Activated CD4-positive, alpha-beta T cell treated with anti-CD3 and anti-CD28 coated beads, Interleukin-2, amount 10 ng/mL, durations not matched to agents 24 days and 14 days (primary cell): ENCODE measurements at regions of chr3 and their contacts with region 1.

Region 1: DNA sequence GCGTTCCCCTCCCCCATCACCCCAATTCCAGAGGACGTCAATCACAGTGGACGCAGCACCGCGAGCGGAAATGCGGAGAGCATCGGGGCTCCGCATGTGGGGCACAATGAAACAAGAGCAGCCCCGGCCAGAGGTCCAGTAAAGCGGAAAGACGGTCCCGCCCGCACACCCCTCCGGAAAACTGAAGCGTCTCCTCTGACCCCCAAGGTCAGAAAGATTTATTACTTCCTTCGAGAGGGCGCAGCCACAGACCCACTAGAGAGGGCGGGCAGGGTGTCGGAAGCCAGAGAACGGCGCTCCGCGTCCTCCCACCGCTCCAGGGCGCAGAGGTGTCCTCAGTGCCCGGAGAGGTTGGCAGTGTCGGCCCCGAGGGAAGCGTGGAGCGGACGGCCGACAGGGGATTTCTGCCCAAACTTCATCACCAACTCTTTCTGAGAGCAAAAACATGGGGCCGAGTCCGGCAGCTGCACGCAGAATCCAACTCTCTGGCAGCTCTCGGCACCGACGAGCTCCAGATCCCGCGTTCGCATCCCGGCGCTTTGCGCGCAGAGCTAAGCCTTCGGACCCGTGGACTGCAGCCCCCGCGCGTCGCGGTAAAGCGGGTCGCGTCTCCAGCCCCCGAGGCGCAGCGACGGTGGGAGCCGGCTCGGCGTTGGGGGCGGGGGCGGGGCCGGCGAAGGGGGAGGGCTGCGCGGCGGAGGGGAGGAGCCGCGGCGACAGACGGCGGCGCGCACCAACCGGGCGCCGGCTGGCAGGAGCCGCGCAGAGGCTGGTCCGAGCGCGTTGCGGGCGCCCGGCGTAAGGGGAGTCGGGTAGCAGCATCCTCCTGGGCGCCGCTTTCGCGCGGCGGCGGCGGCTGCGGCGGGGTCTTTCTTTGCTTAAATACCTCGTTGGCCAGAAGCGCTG is at the start of gene CHST2:
- DNase-seq: peak; percentile 92
- H3K4me3 Mint-ChIP-seq: peak within 1 kb of the TSS; percentile 89
- H3K27ac Mint-ChIP-seq: peak within 1 kb of the TSS; percentile 76
- H3K4me1 Mint-ChIP-seq: peaks cover 29% of the 10 kb centered on the region
- H3K27me3 Mint-ChIP-seq: peaks cover 22% of the 10 kb centered on the region
- total RNA-seq, gene CHST2: 6.1 and 6.4 TPM in 2 replicates

Region 2: DNA sequence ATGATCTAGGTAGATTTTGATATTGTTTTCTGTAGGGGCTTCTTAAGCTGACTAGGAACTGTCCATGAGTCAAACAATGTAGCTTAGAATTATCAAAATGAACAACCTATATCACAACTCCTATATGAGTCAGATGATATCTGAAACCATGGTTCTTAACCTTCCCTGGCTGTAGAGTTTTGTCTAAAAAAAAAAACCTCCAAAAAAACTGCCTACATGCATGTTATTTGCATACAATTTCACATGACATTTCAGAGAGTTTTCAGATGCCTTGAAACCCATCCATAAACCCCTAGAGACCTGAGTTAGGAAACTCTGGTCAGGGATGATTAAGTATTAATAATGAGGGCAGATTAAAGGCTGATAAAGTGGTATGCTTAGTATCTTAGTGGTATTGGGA is 157.3 kb after region 1 on chr3:
- intact Hi-C with region 1: loop called (anchors 5 kb)
- DNase-seq: no peak
- H3K4me3 Mint-ChIP-seq: no peak overlapping the region
- H3K27ac Mint-ChIP-seq: no peak overlapping the region
- H3K4me1 Mint-ChIP-seq: peaks cover 6% of the 10 kb centered on the region
- H3K27me3 Mint-ChIP-seq: no peaks in the 10 kb centered on the region

Region 3: DNA sequence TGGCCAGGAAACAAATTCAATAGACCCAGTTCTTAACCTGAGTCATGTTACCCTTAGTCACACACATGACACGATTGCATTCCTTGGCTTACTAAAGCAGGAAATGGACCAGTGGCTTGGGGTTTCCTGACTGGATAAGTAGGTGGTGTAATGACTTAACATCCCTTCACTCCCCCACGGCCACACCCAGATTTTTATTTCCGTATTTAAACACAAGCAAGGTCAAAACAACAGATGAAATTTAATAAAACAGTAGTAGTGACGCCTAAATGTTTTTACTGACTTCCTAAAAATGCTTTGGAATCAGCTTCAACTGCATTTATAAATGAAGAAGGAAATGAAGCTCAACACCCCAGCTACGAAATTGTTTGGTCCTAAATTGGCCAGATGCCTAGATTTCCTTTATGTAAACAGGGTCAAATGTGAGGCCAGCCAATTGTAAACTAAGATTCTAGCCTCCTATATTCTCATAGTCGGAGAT is 324.6 kb after region 1 on chr3:
- intact Hi-C with region 1: loop called (anchors 5 kb)
- DNase-seq: peak; percentile 74
- H3K4me3 Mint-ChIP-seq: peak overlapping the region; percentile 9
- H3K27ac Mint-ChIP-seq: peak overlapping the region; percentile 23
- H3K4me1 Mint-ChIP-seq: peaks cover 30% of the 10 kb centered on the region
- H3K27me3 Mint-ChIP-seq: peaks cover 2% of the 10 kb centered on the region

Region 4: GRCh38 chr3:143644370-143645089 is 525.3 kb after region 1 on chr3:
- intact Hi-C with region 1: loop called (anchors 10 kb)
- DNase-seq: peak; percentile 65
- H3K4me3 Mint-ChIP-seq: no peak overlapping the region
- H3K27ac Mint-ChIP-seq: no peak overlapping the region
- H3K4me1 Mint-ChIP-seq: no peaks in the 10 kb centered on the region
- H3K27me3 Mint-ChIP-seq: no peaks in the 10 kb centered on the region

Region 5: DNA sequence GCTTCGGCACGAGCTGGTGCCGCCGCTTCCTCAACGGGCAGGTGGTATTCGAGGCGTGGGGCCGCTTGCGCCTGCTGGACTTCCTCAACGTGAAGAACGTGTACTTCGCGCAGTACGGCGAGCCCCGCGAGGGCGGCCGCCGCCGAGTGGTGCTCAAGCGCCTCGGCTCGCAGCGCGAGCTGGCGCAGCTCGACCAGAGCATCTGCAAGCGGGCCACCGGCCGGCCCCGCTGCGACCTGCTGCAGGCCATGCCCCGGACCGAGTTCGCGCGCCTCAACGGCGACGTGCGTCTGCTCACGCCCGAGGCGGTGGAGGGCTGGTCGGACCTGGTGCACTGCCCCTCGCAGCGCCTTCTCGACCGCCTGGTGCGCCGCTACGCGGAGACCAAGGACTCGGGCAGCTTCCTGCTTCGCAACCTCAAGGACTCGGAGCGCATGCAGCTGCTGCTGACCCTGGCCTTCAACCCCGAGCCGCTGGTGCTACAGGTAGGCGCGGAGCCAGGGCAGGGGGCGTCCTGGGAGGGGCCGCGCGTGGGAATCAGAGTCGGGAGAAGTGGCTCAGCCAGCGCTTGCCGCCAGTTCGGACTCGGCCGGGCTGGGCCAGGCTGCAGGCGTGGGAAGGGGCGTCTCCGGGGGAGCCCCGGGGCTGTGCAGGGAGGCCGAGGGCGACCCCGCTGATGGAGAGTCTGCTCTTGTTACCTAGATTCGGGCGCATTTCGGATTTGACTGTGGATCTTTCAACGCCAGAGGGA is 853.4 kb after region 1 on chr3:
- intact Hi-C with region 1: loop called (anchors 2 kb)
- DNase-seq: peak; percentile 92
- H3K4me3 Mint-ChIP-seq: peak overlapping the region; percentile 98
- H3K27ac Mint-ChIP-seq: peak overlapping the region; percentile 96
- H3K4me1 Mint-ChIP-seq: peaks cover 35% of the 10 kb centered on the region
- H3K27me3 Mint-ChIP-seq: peaks cover 16% of the 10 kb centered on the region